ENCODE measurements at regions of chr19 and their contacts with region 1.

Region 1: GRCh38 chr19:17718947-17719711 is at the start of gene MAP1S:
- DNase-seq: peak; percentile 72 to 80 (median 76)
- ATAC-seq: peak; percentile 66
- H3K4me3 ChIP-seq: peak within 1 kb of the TSS; percentile 90
- H3K4me1 ChIP-seq: peaks cover 23% of the 10 kb centered on the region
- CTCF ChIP-seq: no peak
- total RNA-seq, gene MAP1S: 42.2 to 57.2 (median 44.7) TPM

Region 2: GRCh38 chr19:17680235-17680722 is 38.9 kb before region 1 on chr19:
- intact Hi-C with region 1: no loop called
- DNase-seq: peak; percentile 30 to 65 (median 43)
- ATAC-seq: peak; percentile 76
- H3K4me3 ChIP-seq: no peak overlapping the region
- H3K4me1 ChIP-seq: no peaks in the 10 kb centered on the region
- CTCF ChIP-seq: no peak

Region 3: DNA sequence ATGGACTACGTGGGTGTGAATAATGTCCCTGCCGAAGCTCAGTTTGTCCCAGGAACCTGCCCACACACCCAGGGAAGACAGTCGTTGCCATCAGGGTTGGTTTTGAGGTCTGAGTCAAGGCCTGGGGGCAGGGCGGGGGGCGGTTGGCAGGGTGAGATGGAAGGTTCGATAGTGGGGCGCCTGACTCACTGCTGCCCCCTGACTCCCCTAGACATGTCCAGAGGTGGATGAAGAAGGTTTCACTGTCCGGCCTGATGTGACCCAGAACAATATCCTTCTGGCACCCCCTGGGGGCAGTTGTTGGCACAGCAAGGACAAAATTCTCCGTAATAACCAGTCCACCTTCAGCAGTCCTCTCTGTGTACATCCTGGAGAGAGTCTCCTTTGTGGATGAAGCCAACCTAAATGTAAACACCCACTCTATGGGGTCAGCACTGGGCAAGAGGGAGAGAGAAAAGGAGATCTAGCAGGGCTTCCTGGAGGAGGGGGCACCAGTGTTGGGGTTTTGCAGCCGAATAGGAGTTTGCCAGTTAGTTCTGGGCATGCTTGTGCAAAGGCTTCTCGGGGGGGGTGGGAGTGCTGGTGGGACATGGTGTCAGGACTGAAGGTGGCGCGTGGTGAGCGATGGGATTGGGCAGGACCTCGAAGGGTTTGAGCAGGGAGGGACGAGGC is 56.3 kb after region 1 on chr19:
- intact Hi-C with region 1: loop called in 1 of 2 experiments (anchors 10 kb)
- DNase-seq: peak in 2 of 3 donors; percentile 57 to 71
- ATAC-seq: no peak
- H3K4me3 ChIP-seq: no peak overlapping the region
- H3K4me1 ChIP-seq: no peaks in the 10 kb centered on the region
- CTCF ChIP-seq: peak; percentile 30

Region 4: DNA sequence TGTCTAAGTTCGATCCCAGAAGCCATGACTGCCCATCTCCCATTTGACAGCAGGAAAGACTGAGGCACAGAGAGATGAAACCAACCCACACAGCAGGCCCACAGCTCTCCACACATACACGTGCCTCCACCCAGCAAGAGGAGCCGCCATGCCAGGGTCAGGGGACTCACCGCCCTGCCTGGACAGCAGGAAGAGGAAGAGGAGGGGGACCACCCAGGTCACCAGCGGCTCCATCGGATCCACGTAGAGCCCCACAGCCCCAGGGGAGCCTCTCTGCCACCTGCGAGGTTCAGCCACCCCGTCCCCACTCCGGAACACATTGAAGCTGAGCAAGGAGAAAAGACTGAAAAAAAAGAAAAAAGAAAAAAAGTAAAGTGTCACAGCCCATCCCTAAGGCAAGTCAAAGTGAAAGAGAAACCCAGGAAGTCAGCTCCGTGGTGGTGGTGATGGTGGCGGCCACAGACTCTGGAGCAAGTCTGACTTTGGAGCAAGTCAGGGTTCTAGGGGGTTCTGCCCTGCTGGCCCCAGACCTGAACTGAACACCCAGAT is 367.5 kb after region 1 on chr19 and contains the start of gene IL12RB1:
- intact Hi-C with region 1: no loop called
- DNase-seq: peak in 2 of 3 donors; percentile 45 to 51
- ATAC-seq: peak; percentile 62
- H3K4me3 ChIP-seq: no peak within 1 kb of the TSS
- H3K4me1 ChIP-seq: peaks cover 3% of the 10 kb centered on the region
- CTCF ChIP-seq: no peak
- total RNA-seq, gene IL12RB1: 1.8 to 4.0 (median 2.2) TPM